SK-N-SH (cell line): ENCODE measurements at regions of chr16 and their contacts with region 1.

Region 1: DNA sequence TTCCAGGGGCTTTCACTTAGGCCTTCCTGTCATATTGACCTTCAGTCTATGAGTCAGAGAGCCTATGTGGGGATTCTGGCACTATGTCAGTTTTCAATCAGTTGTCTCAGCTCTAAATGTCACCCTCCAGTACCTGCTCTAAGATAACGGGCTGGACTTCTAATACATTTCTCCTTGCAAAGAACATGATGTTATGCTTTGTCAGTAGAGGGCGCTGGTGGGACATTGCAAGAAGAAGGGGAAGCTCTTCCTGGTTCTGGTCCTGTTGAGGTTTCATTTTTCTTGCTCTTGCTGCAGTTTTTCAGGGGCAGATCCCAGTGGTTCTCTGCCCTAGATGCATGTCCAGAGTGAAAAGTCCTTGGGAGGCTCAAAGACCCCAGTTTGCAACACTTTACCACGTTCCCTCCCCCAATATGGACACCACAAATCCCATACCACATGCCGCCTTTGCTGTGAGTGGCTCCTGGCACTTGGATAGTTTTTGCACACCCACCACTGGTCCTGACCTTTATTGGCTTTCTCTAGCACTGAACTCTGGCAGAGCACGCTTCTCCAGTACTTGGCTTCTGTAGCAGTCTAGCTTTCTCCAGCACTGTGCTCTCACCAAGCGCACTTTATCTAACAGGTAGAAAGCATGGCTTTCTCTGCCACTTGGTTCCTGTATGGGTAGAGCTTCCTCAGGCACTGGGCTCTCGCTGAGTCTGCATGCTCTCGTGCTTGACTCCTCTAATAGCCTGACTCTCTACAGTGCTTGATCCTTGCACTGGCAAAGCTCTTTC is 49.0 kb downstream of the BCL7C start:
- DNase-seq: peak; percentile 73
- H3K4me3 ChIP-seq: no peak overlapping the region; a peak in 1 of 4 replicates
- H3K27ac ChIP-seq: no peak overlapping the region
- H3K4me1 ChIP-seq: no peaks in the 10 kb centered on the region; a peak in 1 of 4 replicates
- H3K27me3 ChIP-seq: no peaks in the 10 kb centered on the region
- CTCF ChIP-seq: peak; percentile 83
- EP300 ChIP-seq: no peak
- RAD21 ChIP-seq: peak; percentile 86

Region 2: DNA sequence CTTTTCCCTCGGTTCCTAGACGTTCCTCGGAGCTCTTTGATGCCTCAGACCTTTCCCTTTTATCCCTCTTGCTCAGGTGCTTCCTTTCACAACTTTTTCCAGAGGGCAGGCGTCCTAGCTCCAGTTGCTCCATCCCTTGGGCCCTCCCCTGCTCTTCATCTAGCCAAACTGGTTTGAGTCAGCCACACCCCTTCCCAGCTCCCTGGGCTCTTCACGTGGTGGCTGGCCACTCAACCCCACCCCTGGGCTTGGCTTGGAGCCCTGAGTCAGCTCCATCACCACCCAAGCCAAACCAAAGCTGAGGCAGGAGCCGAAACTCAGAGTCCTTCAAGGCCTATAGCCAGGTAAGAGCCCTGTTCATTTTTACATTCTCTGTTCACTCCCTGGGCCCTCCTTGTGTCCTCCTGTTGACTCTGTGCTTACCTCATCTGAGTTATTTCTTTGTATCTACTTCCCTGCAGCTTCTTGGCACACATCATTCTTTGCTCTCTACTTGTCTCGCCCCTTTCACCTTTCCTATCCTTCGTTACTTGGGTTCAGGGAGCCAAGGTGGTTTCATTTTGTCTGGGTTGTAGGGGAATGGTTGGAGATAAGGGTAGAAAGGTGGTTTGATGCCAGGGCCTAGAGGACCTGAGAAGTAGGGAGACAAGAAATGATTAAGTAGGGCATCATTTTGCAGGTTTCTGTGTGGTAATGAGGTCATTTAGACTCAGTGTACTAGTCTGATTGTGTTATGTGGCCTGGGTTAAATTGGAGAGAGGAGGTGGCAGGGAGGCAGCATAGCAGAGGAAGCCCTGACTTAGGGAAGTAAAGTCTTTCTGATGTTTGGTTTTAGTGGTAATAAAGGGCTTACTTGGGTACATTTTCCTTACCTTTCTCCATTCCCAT is 104.3 kb before region 1 on chr16:
- CTCF ChIA-PET with region 1: no interaction called
- POLR2A ChIA-PET with region 1: no interaction called
- DNase-seq: no peak
- H3K4me3 ChIP-seq: peak overlapping the region in 1 of 2 experiments; percentile 21; a peak in 1 of 4 replicates
- H3K27ac ChIP-seq: peak overlapping the region; percentile 2 to 87
- H3K4me1 ChIP-seq: peaks cover 11 to 21% of the 10 kb centered on the region in 2 experiments; a peak in 3 of 4 replicates
- H3K27me3 ChIP-seq: no peaks in the 10 kb centered on the region
- CTCF ChIP-seq: no peak
- EP300 ChIP-seq: no peak
- RAD21 ChIP-seq: no peak

Region 3: GRCh38 chr16:30820952-30821760 is 23.7 kb before region 1 on chr16:
- CTCF ChIA-PET with region 1: interaction called, 42 read pairs
- POLR2A ChIA-PET with region 1: no interaction called
- DNase-seq: no peak
- H3K4me3 ChIP-seq: no peak overlapping the region
- H3K27ac ChIP-seq: no peak overlapping the region
- H3K4me1 ChIP-seq: no peaks in the 10 kb centered on the region; a peak in 1 of 4 replicates
- H3K27me3 ChIP-seq: no peaks in the 10 kb centered on the region
- CTCF ChIP-seq: no peak
- EP300 ChIP-seq: no peak
- RAD21 ChIP-seq: no peak

Region 4: GRCh38 chr16:30858829-30859423 is 14.1 kb after region 1 on chr16:
- CTCF ChIA-PET with region 1: interaction called, 42 read pairs
- POLR2A ChIA-PET with region 1: no interaction called
- DNase-seq: no peak
- H3K4me3 ChIP-seq: no peak overlapping the region
- H3K27ac ChIP-seq: no peak overlapping the region
- H3K4me1 ChIP-seq: no peaks in the 10 kb centered on the region
- H3K27me3 ChIP-seq: no peaks in the 10 kb centered on the region
- CTCF ChIP-seq: no peak
- EP300 ChIP-seq: no peak
- RAD21 ChIP-seq: no peak

Region 5: GRCh38 chr16:30874821-30875717 is 30.2 kb after region 1 on chr16:
- CTCF ChIA-PET with region 1: interaction called, 14 read pairs
- POLR2A ChIA-PET with region 1: interaction called, 6 read pairs
- DNase-seq: peak; percentile 93
- H3K4me3 ChIP-seq: peak overlapping the region; percentile 75 to 94
- H3K27ac ChIP-seq: peak overlapping the region; percentile 83 to 92
- H3K4me1 ChIP-seq: peaks cover 6 to 7% of the 10 kb centered on the region in 2 experiments; a peak in 2 of 4 replicates
- H3K27me3 ChIP-seq: no peaks in the 10 kb centered on the region
- CTCF ChIP-seq: no peak
- EP300 ChIP-seq: no peak; a peak in 1 of 4 replicates
- RAD21 ChIP-seq: no peak

Region 6: GRCh38 chr16:30902029-30902972 is 57.4 kb after region 1 on chr16:
- CTCF ChIA-PET with region 1: interaction called, 74 read pairs
- POLR2A ChIA-PET with region 1: interaction called, 7 read pairs
- DNase-seq: peak; percentile 94
- H3K4me3 ChIP-seq: peak overlapping the region; percentile 36 to 38
- H3K27ac ChIP-seq: peak overlapping the region; percentile 30 to 44; a peak in 3 of 4 replicates
- H3K4me1 ChIP-seq: peaks cover 5 to 14% of the 10 kb centered on the region in 2 experiments; a peak in 2 of 4 replicates
- H3K27me3 ChIP-seq: no peaks in the 10 kb centered on the region
- CTCF ChIP-seq: no peak
- EP300 ChIP-seq: no peak
- RAD21 ChIP-seq: peak; percentile 30; the same call in 1 of the 2 replicates

Region 7: DNA sequence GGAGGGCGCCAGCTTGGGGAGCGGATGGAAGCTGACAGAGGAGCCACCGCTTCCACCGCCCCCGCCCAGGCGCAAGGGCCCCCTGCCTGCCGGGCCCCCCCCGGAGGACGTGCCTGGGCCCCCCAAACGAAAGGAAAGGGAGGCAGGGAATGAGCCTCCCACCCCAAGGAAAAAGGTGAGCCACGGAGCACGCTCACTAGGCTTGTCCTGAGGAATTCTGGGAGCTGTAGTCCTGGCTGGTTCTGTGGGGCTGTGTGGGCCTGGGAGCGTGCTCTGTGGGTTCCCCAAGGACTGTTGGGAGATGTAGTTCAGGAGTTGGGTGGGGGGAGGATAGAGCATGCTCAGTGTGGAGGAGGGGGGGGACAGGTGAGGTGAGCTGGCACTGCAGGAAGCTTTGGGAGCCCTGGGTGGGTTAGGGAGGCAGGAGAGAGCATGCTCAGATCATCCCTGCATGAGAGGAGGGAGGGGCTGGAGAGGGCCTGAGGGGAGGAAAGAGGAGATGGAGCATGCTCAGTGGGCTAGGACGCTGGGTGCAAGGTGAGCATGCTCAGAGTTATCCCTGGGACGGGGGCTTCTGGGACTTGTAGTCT is 83.0 kb after region 1 on chr16:
- CTCF ChIA-PET with region 1: interaction called, 10 read pairs
- POLR2A ChIA-PET with region 1: no interaction called
- DNase-seq: peak; percentile 95
- H3K4me3 ChIP-seq: no peak overlapping the region; a peak in 1 of 4 replicates
- H3K27ac ChIP-seq: peak overlapping the region in 1 of 2 experiments; percentile 58; a peak in 1 of 4 replicates
- H3K4me1 ChIP-seq: peaks cover 0 to 23% of the 10 kb centered on the region in 2 experiments; a peak in 1 of 4 replicates
- H3K27me3 ChIP-seq: no peaks in the 10 kb centered on the region
- CTCF ChIP-seq: no peak
- EP300 ChIP-seq: no peak
- RAD21 ChIP-seq: no peak

Region 8: GRCh38 chr16:30977502-30977901 is 132.6 kb after region 1 on chr16:
- CTCF ChIA-PET with region 1: no interaction called
- POLR2A ChIA-PET with region 1: no interaction called
- DNase-seq: peak; percentile 68
- H3K4me3 ChIP-seq: no peak overlapping the region
- H3K27ac ChIP-seq: no peak overlapping the region
- H3K4me1 ChIP-seq: no peaks in the 10 kb centered on the region
- H3K27me3 ChIP-seq: no peaks in the 10 kb centered on the region
- CTCF ChIP-seq: peak; percentile 54
- EP300 ChIP-seq: no peak
- RAD21 ChIP-seq: no peak

Region 9: DNA sequence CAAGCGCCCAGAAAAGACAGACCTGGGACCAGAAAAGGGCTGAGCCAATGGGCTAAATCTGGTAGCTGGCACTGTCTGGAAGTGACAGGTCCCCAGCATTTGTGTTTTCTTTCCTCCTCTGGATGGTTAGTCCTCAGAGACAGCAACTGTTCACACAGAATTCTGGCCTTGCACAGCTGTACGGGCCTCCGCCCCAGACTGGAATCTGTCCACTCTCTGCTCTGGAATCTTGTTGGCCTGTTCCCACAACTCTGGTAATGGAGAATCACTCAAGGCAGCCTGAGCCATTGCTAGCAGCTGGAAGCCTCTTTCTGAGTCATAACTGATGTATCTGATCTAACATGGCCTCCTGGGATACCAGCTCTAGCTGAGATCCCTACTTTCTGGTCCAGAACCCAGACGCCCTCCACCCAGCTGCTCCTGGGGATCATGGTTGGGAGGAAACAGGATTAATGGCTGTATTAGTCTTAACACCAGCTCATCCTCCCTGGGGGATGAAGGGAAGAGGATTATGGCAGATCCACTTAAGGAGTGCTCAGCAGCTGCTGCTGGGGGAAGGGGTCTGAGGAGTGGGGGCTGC is 220.1 kb after region 1 on chr16:
- CTCF ChIA-PET with region 1: no interaction called
- POLR2A ChIA-PET with region 1: no interaction called
- DNase-seq: no peak
- H3K4me3 ChIP-seq: no peak overlapping the region
- H3K27ac ChIP-seq: peak overlapping the region; percentile 18 to 89
- H3K4me1 ChIP-seq: peaks cover 0 to 11% of the 10 kb centered on the region in 2 experiments; a peak in 3 of 4 replicates
- H3K27me3 ChIP-seq: no peaks in the 10 kb centered on the region
- CTCF ChIP-seq: no peak
- EP300 ChIP-seq: no peak
- RAD21 ChIP-seq: no peak